Colonic mucosa (tissue), 4 donors: ENCODE measurements at regions of chr16 and their contacts with region 1.

Region 1: DNA sequence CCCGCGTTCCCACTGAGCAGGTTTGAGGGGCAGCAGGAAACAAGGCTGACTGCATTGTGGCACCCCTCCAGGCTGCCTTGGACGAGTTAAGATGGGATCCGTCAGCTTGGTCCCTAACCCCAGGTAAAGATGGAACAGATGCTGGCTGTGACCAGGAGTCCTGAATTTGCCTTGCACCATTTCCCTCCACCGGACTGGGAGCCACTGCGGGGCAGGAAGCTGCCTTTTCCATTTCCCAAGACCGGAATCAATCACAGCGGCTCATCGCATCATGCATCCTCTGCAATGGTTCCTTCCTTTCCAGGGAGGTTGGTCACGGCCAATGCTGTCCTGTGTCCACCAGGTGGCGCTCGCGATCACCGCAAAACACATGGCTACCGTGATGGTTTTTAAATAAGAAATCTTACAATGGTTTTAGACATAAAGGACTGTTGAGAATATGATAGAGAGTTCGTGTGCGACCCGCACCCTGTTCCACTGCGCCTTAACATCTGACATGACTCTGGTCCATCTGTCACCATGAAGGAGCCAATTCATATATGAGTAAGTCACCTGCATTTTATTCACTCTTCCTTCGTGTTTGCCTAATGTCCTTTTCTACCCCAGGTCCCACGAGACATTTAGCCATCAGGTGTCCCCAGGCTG is 6.8 kb upstream of the MEAK7 start:
- DNase-seq: peak; percentile 89
- H3K4me3 ChIP-seq: no peak overlapping the region
- H3K27ac ChIP-seq: no peak overlapping the region
- H3K4me1 ChIP-seq: no peaks in the 10 kb centered on the region
- H3K27me3 ChIP-seq: no peaks in the 10 kb centered on the region
- CTCF ChIP-seq: peak; percentile 96

Region 2: DNA sequence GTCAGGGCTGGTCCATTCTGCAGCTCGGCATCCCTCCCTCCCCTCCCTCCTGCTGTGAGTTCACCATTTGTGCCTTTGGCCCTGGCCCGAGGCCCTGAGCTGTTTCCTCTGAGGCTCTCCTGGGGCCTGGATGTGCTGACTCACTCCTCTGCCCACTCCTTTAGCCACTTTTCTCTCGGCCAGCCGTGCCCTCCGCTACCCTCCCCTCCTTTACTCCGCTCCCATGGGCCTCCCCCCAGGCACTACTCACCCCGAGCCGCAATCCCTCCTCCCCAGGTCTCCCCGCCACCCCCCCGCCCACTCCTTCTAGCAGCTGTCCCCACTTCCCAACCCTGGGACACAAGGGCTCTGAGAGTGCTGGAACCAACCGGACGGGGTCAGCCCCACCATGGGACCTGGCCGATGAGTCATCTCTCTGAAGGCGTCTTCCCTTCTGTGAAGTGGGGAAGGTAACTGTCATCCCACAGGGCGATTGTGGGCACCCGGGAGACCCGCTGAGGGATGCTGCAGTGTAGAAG is 282.9 kb before region 1 on chr16:
- intact Hi-C with region 1: no loop called
- DNase-seq: peak; percentile 23
- H3K4me3 ChIP-seq: no peak overlapping the region
- H3K27ac ChIP-seq: no peak overlapping the region
- H3K4me1 ChIP-seq: no peaks in the 10 kb centered on the region
- H3K27me3 ChIP-seq: no peaks in the 10 kb centered on the region
- CTCF ChIP-seq: no peak

Region 3: GRCh38 chr16:84617791-84618580 is 106.7 kb after region 1 on chr16 and contains the start of gene COTL1:
- intact Hi-C with region 1: loop called (anchors 2 kb)
- DNase-seq: peak; percentile 97
- H3K4me3 ChIP-seq: peak within 1 kb of the TSS; percentile 84
- H3K27ac ChIP-seq: peak within 1 kb of the TSS; percentile 74
- H3K4me1 ChIP-seq: peaks cover 8% of the 10 kb centered on the region
- H3K27me3 ChIP-seq: no peaks in the 10 kb centered on the region
- CTCF ChIP-seq: no peak
- total RNA-seq, gene COTL1: 79.1 to 138 TPM